ENCODE measurements at regions of chr17 and their contacts with region 1.

Region 1: GRCh38 chr17:38584350-38584925 is 21.3 kb downstream of the SRCIN1 start:
- DNase-seq: peak; percentile 81
- ATAC-seq: peak; percentile 87
- H3K4me3 Mint-ChIP-seq: no peak overlapping the region
- H3K27ac Mint-ChIP-seq: no peak overlapping the region
- H3K4me1 Mint-ChIP-seq: peaks cover 3% of the 10 kb centered on the region
- H3K27me3 Mint-ChIP-seq: peaks cover 60% of the 10 kb centered on the region

Region 2: DNA sequence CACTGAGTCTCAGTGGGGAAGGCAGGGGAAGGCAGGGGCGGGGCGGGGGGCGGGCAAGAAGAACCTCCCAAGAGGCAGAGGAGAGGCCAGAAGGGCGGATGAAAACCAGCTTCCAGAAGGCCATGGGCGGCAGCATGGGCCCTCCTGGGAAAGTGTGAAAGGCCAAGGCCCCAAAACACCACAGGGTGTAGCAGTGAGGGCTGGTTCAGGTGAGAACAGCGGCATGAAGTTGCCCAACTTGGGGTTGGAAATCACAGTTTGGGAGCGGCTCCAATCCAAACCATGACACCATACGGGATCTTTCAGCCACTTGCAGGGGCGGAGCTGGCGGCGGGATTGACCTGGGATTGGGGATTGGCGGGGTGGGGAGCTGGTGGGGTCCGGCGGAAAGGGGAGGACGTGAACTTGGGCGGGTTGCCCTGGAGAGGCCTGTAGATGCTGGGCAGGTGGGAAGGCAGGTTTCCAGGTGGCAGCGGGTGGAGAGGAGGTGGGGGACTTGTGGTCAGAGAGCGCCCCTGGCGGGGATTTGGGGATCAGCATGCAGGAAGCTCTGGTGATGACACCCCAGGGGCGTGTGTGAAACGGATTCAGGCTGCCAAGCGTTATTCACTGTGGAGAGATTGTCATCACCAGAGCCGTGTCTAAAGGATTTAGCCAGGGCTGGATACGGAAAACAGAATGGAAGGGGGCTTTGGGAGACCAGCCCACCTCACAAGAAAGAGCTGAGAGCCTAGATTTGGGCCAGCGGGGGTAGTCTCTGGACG is 75.2 kb before region 1 on chr17:
- CTCF ChIA-PET with region 1: no interaction called
- POLR2A ChIA-PET with region 1: no interaction called
- intact Hi-C with region 1: loop called in 1 of 2 experiments (anchors 10 kb)
- DNase-seq: peak; percentile 90
- ATAC-seq: peak; percentile 95
- H3K4me3 Mint-ChIP-seq: peak overlapping the region; percentile 74
- H3K27ac Mint-ChIP-seq: peak overlapping the region; percentile 77
- H3K4me1 Mint-ChIP-seq: peaks cover 7% of the 10 kb centered on the region
- H3K27me3 Mint-ChIP-seq: peaks cover 33% of the 10 kb centered on the region

Region 3: GRCh38 chr17:38563362-38564253 is 20.8 kb before region 1 on chr17:
- CTCF ChIA-PET with region 1: interaction called, 127 read pairs
- POLR2A ChIA-PET with region 1: interaction called, 6 read pairs
- intact Hi-C with region 1: loop called (anchors 1 kb)
- DNase-seq: no peak
- ATAC-seq: no peak
- H3K4me3 Mint-ChIP-seq: no peak overlapping the region
- H3K27ac Mint-ChIP-seq: no peak overlapping the region
- H3K4me1 Mint-ChIP-seq: peaks cover 23% of the 10 kb centered on the region
- H3K27me3 Mint-ChIP-seq: peaks cover 71% of the 10 kb centered on the region